ENCODE measurements at regions of chr1 and their contacts with region 1.

Region 1: GRCh38 chr1:160437432-160438316 is 37.3 kb downstream of the VANGL2 start:
- DNase-seq: no peak
- H3K4me3 ChIP-seq: no peak overlapping the region
- CTCF ChIP-seq: no peak

Region 2: DNA sequence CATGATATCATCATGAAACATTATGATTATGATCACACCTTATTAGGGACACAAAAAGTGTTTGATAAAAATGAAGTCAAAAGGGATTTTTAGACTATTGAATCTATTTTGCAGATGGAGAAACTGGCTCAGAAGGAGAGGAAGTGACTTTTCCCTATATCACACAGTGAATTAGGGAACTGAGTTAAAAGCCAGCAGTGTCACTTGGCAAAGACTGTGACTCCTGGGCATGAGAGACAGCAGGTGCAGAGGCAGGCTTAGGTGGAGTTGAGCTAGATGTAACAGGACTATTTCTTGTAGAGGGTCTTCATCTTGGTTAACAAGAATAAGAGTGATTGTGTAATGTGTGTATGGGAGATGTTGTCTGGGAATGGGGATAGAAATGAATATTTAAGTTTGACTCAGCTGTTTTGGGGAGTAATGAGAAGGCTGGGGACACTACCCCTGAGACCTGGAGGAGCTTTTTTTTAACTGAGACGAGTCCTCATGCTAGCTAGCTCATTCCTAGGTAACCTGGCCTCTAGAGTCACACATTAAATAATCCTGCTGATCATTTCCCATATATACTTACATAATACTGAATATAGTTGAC is 142.6 kb after region 1 on chr1:
- in situ Hi-C with region 1: loop called (anchors 10 kb)
- DNase-seq: no peak
- H3K4me3 ChIP-seq: no peak overlapping the region
- CTCF ChIP-seq: no peak